Tibial artery (tissue), 4 donors: ENCODE measurements at regions of chr2 and their contacts with region 1.

Region 1: GRCh38 chr2:200306196-200306930 is at the start of gene SPATS2L:
- DNase-seq: peak; percentile 70 to 85
- H3K4me3 ChIP-seq: peak within 1 kb of the TSS; percentile 75 to 89
- H3K27ac ChIP-seq: peak within 1 kb of the TSS; percentile 87 to 96
- H3K4me1 ChIP-seq: peaks cover 0 to 42% (median 19%) of the 10 kb centered on the region in 4 donors
- H3K27me3 ChIP-seq: no peaks in the 10 kb centered on the region
- CTCF ChIP-seq: no peak

Region 2: GRCh38 chr2:200338701-200339100 is 32.3 kb after region 1 on chr2:
- intact Hi-C with region 1: no loop called
- DNase-seq: no peak
- H3K4me3 ChIP-seq: no peak overlapping the region
- H3K27ac ChIP-seq: peak overlapping the region in 1 of 2 donors; percentile 24
- H3K4me1 ChIP-seq: peaks cover 0 to 79% (median 27%) of the 10 kb centered on the region in 4 donors
- H3K27me3 ChIP-seq: no peaks in the 10 kb centered on the region
- CTCF ChIP-seq: no peak

Region 3: DNA sequence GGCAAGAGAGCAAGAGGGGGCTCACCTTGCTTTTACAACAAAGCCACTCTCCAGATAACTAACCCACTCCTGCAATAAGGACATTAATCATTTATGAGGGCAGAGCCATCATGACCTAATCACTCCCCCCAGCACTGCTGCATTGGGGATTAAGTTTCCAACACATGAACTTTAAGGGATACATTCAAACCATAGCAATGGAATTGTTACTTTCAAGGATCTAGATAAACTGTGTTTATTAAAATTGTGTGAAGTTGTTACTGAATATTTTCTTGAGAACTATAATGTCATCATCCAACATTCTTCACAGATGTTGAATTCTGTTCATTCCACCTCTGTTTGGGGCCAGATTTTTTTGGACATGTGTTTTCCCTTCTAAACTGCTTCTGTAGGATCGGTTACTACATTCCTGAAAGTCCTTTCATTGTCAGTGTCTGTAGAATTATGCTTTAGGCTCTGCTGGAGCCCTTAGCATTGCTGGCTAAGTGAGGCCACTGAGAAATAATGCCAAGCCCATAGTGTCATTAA is 50.6 kb after region 1 on chr2:
- intact Hi-C with region 1: loop called (anchors 5 kb)
- DNase-seq: no peak
- H3K4me3 ChIP-seq: no peak overlapping the region
- H3K27ac ChIP-seq: peak overlapping the region; percentile 40 to 50
- H3K4me1 ChIP-seq: peaks cover 0 to 43% (median 29%) of the 10 kb centered on the region in 4 donors
- H3K27me3 ChIP-seq: no peaks in the 10 kb centered on the region
- CTCF ChIP-seq: no peak